ENCODE measurements at regions of chr20 and their contacts with region 1.

Region 1: GRCh38 chr20:53623454-53624211 is 30.0 kb upstream of the ZNF217 start:
- DNase-seq: peak; percentile 61 to 86 (median 71)
- ATAC-seq: peak; percentile 90
- H3K4me3 ChIP-seq: peak overlapping the region; percentile 23
- H3K27ac ChIP-seq: peak overlapping the region; percentile 95
- H3K4me1 ChIP-seq: peaks cover 21 to 32% of the 10 kb centered on the region in 2 experiments; a peak in 4 of 5 replicates
- H3K27me3 ChIP-seq: no peaks in the 10 kb centered on the region
- CTCF ChIP-seq: peak in 1 of 3 experiments; percentile 9; a peak in 1 of 6 replicates
- EP300 ChIP-seq: no peak
- POLR2A ChIP-seq: peak; percentile 79
- RAD21 ChIP-seq: peak in 1 of 2 experiments; percentile 31; a peak in 2 of 4 replicates

Region 2: DNA sequence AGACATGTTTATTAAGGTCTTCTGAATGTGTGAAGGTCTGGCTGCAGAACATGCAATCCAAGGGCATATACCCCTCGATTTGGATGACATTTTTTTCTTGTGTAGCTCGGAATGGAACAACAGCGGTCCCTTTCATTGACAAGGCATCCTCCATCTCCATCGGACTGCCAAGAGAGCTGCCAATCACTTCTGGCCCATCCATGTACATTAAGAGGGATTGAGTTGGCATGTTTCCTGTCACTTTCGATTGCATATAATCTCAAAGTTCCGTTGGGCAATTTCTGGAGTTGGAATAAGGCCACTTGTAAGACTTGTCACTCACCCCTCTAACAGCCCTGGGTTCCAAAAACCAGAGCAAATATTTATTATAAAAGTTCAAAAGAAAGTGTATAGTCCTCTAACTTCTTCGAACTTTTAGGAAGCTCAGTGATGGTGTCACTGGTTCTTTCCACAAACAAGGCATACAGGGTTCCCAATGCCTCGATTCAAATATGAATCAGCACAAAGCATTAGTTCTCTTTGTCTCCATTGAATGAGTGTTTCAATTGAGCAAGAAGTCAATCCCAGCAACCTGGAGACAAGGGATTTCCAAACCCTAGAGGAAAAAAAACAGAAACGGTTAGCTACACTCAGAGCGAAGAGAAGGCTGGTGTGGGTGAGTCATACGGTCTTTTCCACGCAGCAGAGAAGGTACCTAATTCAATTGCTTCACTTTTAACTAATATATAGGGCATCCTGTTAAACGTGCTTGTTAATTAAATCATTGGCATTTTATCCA is 40.9 kb before region 1 on chr20:
- CTCF ChIA-PET with region 1: no interaction called
- POLR2A ChIA-PET with region 1: no interaction called
- in situ Hi-C with region 1: no loop called
- intact Hi-C with region 1: no loop called
- DNase-seq: no peak
- ATAC-seq: no peak
- H3K4me3 ChIP-seq: no peak overlapping the region
- H3K27ac ChIP-seq: no peak overlapping the region
- H3K4me1 ChIP-seq: peaks cover 8 to 24% of the 10 kb centered on the region in 2 experiments; a peak in 4 of 5 replicates
- H3K27me3 ChIP-seq: no peaks in the 10 kb centered on the region
- CTCF ChIP-seq: no peak
- EP300 ChIP-seq: no peak
- POLR2A ChIP-seq: no peak
- RAD21 ChIP-seq: no peak

Region 3: DNA sequence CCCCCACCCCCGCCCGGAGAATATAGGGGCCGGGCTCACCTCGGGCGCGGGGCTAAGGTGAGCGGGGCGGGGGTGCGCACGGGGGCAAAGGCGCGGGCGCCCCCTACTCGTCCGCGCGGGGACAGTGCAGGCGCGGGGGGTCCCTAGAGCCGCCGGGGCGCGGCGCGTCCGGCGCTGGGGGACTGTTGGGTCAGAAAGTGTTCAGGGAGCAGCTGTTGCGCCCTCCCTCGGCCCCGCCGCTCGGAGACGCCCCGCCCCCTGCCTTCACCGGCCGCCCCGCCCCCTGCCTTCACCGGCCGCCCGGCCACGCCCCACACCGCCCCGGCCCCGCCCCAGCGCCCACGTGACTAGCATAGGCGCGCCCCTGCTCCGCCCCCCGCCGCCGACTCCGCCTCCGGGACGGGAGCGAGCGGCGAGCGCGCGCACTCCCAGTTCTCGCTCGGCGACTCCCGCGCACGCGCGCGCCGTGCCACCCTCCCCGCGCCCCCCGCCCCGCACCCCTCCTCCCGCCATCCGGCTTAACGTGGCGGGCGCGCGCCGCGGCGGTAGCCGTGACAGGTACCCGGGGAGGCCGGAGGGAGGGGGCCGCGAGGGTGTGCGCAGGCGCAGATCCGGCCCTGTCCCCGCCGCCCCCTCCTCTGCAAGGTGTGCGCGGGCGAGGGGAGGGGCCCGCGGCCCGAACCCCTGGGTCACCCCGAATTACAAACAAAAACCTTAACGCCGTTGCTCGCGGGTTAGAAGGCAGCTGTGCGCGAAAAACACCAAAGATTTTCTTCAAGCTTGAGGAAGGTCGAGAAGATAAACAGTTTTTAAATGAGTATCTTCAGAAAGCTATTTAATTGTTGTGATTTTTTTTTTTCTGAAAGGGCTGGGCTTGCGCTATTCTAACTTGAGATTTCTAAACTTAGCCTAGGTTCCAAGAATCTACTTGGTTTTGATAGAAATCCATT is 29.3 kb before region 1 on chr20:
- CTCF ChIA-PET with region 1: no interaction called
- POLR2A ChIA-PET with region 1: interaction called, 13 read pairs
- in situ Hi-C with region 1: no loop called
- intact Hi-C with region 1: no loop called
- DNase-seq: peak; percentile 85 to 92 (median 88)
- ATAC-seq: peak; percentile 76
- H3K4me3 ChIP-seq: peak overlapping the region; percentile 90
- H3K27ac ChIP-seq: peak overlapping the region; percentile 93
- H3K4me1 ChIP-seq: peaks cover 8 to 15% of the 10 kb centered on the region in 2 experiments; a peak in 4 of 5 replicates
- H3K27me3 ChIP-seq: no peaks in the 10 kb centered on the region
- CTCF ChIP-seq: peak in 2 of 3 experiments; percentile 59 to 79; a peak in 4 of 6 replicates
- EP300 ChIP-seq: no peak
- POLR2A ChIP-seq: no peak
- RAD21 ChIP-seq: peak; percentile 12 to 58; a peak in 2 of 4 replicates

Region 4: GRCh38 chr20:53635221-53635924 is 11.7 kb after region 1 on chr20:
- CTCF ChIA-PET with region 1: no interaction called
- POLR2A ChIA-PET with region 1: interaction called, 23 read pairs
- in situ Hi-C with region 1: no loop called
- intact Hi-C with region 1: loop called (anchors 2 kb)
- DNase-seq: no peak
- ATAC-seq: no peak
- H3K4me3 ChIP-seq: no peak overlapping the region
- H3K27ac ChIP-seq: no peak overlapping the region; the same call in 2 of the 3 replicates
- H3K4me1 ChIP-seq: peaks cover 16% of the 10 kb centered on the region in 2 experiments; a peak in 4 of 5 replicates
- H3K27me3 ChIP-seq: no peaks in the 10 kb centered on the region
- CTCF ChIP-seq: no peak
- EP300 ChIP-seq: no peak
- POLR2A ChIP-seq: no peak
- RAD21 ChIP-seq: no peak

Region 5: GRCh38 chr20:53643031-53643832 is 19.6 kb after region 1 on chr20:
- CTCF ChIA-PET with region 1: no interaction called
- POLR2A ChIA-PET with region 1: interaction called, 23 read pairs
- in situ Hi-C with region 1: no loop called
- intact Hi-C with region 1: loop called (anchors 2 kb)
- DNase-seq: peak; percentile 37 to 75 (median 52)
- ATAC-seq: peak; percentile 83
- H3K4me3 ChIP-seq: no peak overlapping the region; the same call in 1 of the 2 replicates
- H3K27ac ChIP-seq: peak overlapping the region; percentile 95
- H3K4me1 ChIP-seq: peaks cover 23 to 25% of the 10 kb centered on the region in 2 experiments
- H3K27me3 ChIP-seq: no peaks in the 10 kb centered on the region
- CTCF ChIP-seq: no peak
- EP300 ChIP-seq: peak; percentile 60; the same call in 1 of the 2 replicates
- POLR2A ChIP-seq: no peak; the same call in none of the 2 replicates
- RAD21 ChIP-seq: peak in 1 of 2 experiments; percentile 9; a peak in 1 of 4 replicates